Activated naive CD4-positive, alpha-beta T cell treated with anti-CD3 and anti-CD28 coated beads, Interleukin-2, amount 10 ng/mL, durations not matched to agents 7 days and 5 days (primary cell): ENCODE measurements at regions of chr3 and their contacts with region 1.

Region 1: DNA sequence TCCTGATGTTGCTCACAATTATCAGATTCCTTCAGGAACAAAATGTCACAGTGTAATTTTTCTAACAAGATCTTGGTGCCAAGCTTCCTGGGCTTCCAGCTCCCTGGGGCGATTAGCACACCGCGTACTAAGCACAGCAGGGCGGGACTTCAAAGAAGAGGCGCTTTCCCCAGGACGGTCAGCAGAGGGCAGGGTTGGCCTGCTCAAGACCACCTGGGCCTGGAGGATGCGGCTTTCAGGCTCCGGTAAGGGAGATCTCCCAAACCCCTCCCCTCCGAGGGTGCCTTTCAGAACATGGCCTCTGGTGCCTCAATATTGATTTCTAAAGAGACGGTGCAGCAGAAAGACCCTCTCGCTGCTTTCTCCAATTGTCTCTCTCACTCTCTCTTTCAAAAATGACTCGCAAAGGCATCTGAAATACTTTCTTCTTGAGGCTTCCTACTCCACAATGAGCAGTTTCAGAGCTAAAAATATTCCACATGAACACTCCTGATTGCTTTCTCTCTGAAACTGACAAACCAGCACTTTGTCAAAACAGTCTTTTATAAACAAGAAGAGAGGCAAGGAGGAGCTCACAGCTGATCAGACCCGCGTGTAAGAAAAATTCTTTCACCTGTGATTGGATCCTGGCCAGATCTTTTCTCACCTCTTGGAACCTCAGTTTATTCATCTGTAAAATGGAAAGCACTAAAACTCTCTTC is 154.0 kb downstream of the ADAMTS9 start:
- DNase-seq: peak; percentile 60
- H3K4me3 Mint-ChIP-seq: no peak overlapping the region
- H3K27ac Mint-ChIP-seq: no peak overlapping the region
- H3K4me1 Mint-ChIP-seq: no peaks in the 10 kb centered on the region
- H3K27me3 Mint-ChIP-seq: peaks cover 7% of the 10 kb centered on the region

Region 2: GRCh38 chr3:64494145-64494915 is 39.4 kb before region 1 on chr3:
- CTCF ChIA-PET with region 1: no interaction called
- DNase-seq: no peak
- H3K4me3 Mint-ChIP-seq: no peak overlapping the region
- H3K27ac Mint-ChIP-seq: no peak overlapping the region
- H3K4me1 Mint-ChIP-seq: no peaks in the 10 kb centered on the region
- H3K27me3 Mint-ChIP-seq: peaks cover 47% of the 10 kb centered on the region

Region 3: GRCh38 chr3:64508140-64508539 is 25.6 kb before region 1 on chr3:
- CTCF ChIA-PET with region 1: no interaction called
- DNase-seq: no peak
- H3K4me3 Mint-ChIP-seq: no peak overlapping the region
- H3K27ac Mint-ChIP-seq: no peak overlapping the region
- H3K4me1 Mint-ChIP-seq: no peaks in the 10 kb centered on the region
- H3K27me3 Mint-ChIP-seq: peaks cover 4% of the 10 kb centered on the region

Region 4: DNA sequence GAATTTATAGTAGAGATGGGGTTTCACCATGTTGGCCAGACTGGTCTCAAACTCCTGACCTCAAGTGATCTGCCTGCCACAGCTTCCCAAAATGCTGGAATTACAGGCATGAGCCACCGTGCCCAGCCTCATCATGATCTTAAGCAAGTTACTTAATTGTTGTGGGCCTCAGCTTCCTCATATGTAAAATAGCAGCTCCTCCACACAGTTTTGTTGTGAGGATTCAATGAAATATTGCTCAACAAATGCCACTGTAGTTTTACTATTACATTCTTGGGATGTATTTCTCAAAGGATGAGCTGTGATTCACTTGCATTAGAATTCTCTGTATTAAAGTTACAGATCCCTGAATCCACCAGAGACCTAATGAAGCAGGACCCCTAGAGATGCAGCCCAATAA is 14.8 kb before region 1 on chr3:
- CTCF ChIA-PET with region 1: interaction called, 10 read pairs
- DNase-seq: no peak
- H3K4me3 Mint-ChIP-seq: no peak overlapping the region
- H3K27ac Mint-ChIP-seq: no peak overlapping the region
- H3K4me1 Mint-ChIP-seq: no peaks in the 10 kb centered on the region
- H3K27me3 Mint-ChIP-seq: no peaks in the 10 kb centered on the region

Region 5: DNA sequence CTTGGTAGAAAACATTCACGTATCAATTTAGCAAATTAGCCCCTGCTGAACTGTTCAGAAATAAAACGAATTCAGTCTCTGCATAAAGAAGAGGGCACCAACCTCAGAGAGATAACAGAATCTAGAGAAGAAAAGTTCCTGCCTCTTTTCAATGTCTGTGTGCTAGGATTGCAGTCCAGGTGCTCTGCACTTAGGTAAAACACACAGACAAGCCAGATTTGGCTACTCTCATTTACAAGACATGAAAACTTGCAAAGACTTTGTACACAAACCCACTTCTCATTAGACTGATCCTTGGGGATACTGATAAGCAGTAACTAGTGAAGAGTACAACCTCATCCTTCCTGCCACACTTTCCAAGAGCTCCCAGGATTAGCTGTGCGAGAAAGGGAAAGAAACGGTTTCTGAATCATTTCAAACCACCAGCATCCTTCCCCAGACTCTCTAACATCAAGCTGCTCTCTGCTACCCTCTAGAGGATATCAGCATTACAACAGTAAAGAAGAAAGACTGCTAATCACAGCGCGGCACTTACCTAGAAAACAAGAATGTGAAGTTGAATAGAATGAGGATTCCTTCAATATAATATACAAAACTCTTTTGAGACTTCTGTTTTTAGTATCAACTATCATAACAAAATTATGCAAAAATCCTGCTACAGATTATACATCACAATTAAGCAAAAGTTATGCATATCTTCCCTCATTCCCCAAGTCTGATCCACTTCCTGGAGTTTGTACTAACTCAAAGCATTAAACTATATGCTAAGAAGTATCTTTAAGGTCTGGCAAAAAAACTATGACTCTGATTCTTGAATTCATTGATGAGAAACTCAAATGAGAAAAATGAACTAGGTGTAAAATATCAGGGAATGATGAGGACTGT is 1198.5 kb after region 1 on chr3:
- CTCF ChIA-PET with region 1: interaction called, 11 read pairs
- DNase-seq: no peak
- H3K4me3 Mint-ChIP-seq: no peak overlapping the region
- H3K27ac Mint-ChIP-seq: no peak overlapping the region
- H3K4me1 Mint-ChIP-seq: no peaks in the 10 kb centered on the region
- H3K27me3 Mint-ChIP-seq: peaks cover 8% of the 10 kb centered on the region